Esophagus muscularis mucosa (tissue), 4 donors: ENCODE measurements at regions of chr4 and their contacts with region 1.

Region 1: DNA sequence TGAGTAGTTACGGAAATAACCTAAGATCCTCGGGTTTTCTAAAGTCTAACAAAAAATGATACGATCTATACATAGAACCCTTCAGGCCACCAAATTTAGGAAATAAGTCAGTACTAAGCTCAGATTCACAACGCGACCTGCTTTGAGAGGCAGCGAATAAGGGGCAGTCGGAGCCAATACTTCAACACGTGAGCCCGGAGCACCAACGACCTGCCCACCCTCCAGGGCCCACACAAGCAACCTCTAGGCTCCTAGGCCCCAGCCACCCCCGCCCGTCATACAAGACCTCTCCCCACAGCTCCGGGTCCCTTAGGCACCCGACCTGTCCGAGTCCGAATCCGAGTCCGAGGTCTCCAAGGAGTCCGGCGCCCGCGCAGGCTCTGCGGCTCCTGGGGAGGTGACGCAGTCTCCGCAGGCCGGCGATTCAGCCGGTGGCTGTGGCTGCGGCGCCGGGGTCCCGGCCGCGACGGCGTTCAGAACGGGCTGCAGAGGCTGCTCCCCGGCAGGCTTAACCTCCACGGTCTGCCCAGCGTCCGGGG is 580 bp downstream of the NAF1 start:
- DNase-seq: no peak
- H3K4me3 ChIP-seq: peak overlapping the region; percentile 73 to 97 (median 84)
- H3K27ac ChIP-seq: peak overlapping the region; percentile 92 to 96 (median 94)
- H3K4me1 ChIP-seq: peaks cover 5 to 31% (median 28%) of the 10 kb centered on the region in 4 donors
- H3K27me3 ChIP-seq: no peaks in the 10 kb centered on the region
- CTCF ChIP-seq: no peak
- EP300 ChIP-seq: no peak
- POLR2A ChIP-seq: no peak

Region 2: GRCh38 chr4:163350672-163351071 is 184.6 kb after region 1 on chr4:
- intact Hi-C with region 1: no loop called
- DNase-seq: no peak
- H3K4me3 ChIP-seq: no peak overlapping the region
- H3K27ac ChIP-seq: no peak overlapping the region
- H3K4me1 ChIP-seq: no peaks in the 10 kb centered on the region
- H3K27me3 ChIP-seq: peaks cover 0 to 16% (median 0%) of the 10 kb centered on the region in 4 donors
- CTCF ChIP-seq: no peak
- EP300 ChIP-seq: no peak
- POLR2A ChIP-seq: no peak

Region 3: DNA sequence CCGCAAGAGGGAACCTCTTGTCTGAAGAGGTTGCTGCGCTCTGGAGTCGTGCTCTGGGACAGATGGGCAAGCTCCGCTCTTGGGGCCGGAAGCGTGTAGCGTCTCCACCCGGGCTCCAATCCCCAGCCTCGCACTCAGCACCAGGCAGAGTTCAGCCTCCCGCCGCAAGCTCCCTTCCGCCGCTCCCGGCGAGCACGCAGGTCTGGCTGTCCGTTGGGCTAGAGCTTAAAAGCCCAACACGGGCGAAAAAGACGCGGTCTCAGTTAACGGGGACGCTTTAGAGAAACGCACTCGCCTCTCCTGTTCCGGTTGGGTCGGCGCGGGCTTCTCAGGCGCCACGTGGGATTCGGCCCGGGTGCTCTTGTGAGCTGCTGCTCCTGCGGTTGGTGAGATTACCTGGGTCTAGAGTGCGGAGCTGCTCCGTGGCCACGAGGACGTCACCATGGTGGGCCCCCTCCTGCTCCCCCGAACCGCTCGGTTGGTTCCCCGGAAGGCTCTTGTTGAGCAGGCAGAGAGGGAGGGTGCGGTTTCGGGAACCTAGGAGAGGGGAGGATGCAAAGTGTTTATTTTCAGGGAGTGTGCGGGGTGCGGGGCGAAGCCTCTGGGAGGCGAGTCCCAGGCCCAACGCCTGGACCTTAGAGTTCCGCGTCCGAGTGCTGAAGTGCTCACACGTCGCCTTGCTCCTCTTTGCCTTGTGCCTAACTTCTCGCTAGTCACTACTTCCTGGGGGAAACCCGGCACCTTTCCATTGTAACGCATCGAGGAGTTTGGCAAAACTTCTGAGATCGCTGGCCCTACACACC is 328.5 kb after region 1 on chr4 and contains the start of gene TMA16:
- intact Hi-C with region 1: loop called (anchors 10 kb)
- DNase-seq: peak; percentile 94
- H3K4me3 ChIP-seq: peak within 1 kb of the TSS; percentile 63 to 83 (median 72)
- H3K27ac ChIP-seq: peak within 1 kb of the TSS; percentile 74 to 84 (median 82)
- H3K4me1 ChIP-seq: peaks cover 4 to 21% (median 15%) of the 10 kb centered on the region in 4 donors
- H3K27me3 ChIP-seq: no peaks in the 10 kb centered on the region
- CTCF ChIP-seq: peak in 1 of 3 experiments; percentile 10
- EP300 ChIP-seq: no peak
- POLR2A ChIP-seq: no peak
- total RNA-seq, gene TMA16: 11.2 to 21.9 (median 16.6) TPM

Region 4: DNA sequence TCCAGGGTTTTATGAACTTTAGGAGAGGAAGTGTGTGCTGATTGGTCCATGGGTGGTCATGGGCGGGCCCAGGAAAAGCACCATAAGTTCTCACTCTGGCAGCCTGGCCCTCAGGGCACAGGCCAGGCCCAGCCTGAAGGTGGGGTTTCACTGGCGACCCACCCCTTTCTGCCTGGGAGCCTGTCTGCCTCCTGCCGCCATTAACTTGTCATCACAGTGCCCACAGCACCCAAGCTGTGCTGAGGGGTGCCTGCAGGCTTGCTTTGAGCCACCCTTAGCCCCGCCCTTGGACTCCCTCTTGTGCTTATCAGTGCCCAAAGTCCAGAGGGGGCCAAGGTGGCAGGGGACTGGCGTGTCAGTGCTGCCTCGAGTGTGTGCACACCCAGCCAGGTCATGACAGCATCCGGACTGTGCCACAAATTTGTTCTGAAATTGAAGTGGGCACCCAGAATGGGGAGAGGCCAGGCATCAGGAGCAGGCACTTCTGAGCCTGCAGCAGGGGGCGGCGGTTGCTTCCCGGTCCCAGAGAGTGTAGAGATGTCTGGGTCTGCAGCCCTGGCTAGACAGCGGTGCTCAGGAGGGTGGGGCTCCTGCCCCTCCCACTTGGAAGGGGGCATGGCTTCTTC is 784.0 kb after region 1 on chr4:
- intact Hi-C with region 1: no loop called
- DNase-seq: no peak
- H3K4me3 ChIP-seq: no peak overlapping the region
- H3K27ac ChIP-seq: no peak overlapping the region
- H3K4me1 ChIP-seq: no peaks in the 10 kb centered on the region
- H3K27me3 ChIP-seq: no peaks in the 10 kb centered on the region
- CTCF ChIP-seq: no peak
- EP300 ChIP-seq: no peak
- POLR2A ChIP-seq: no peak